Panc1 (cell line): ENCODE measurements at regions of chr2 and their contacts with region 1.

Region 1: DNA sequence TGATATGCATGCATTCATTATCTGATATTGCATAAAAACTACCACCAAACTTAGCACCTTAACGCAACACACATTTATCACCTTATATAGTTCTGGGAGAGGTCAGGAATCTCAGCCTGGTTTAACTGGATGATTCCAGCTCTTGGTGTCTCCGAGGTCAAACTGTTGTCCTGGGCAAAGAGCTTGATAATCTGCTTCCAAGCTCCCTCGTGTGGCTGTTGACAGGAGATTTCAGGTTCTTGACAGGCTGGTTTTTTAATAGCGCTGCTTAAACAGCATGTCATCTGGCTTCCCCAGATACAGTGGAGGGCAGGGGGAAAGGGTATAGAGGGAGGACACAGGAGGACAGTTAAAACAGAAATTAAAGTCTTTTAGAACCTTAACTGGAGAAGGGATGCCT is 785.0 kb downstream of the CNTNAP5 start:
- DNase-seq: no peak
- ATAC-seq: peak; percentile 80
- H3K4me3 ChIP-seq: no peak overlapping the region
- H3K27ac ChIP-seq: no peak overlapping the region
- H3K4me1 ChIP-seq: no peaks in the 10 kb centered on the region
- H3K27me3 ChIP-seq: no peaks in the 10 kb centered on the region
- CTCF ChIP-seq: peak; percentile 70

Region 2: GRCh38 chr2:124027182-124027581 is 783.0 kb before region 1 on chr2:
- CTCF ChIA-PET with region 1: interaction called, 3 read pairs
- POLR2A ChIA-PET with region 1: no interaction called
- in situ Hi-C with region 1: no loop called
- intact Hi-C with region 1: loop called (anchors 5 kb)
- DNase-seq: peak; percentile 33
- ATAC-seq: peak; percentile 91
- H3K4me3 ChIP-seq: no peak overlapping the region
- H3K27ac ChIP-seq: no peak overlapping the region
- H3K4me1 ChIP-seq: no peaks in the 10 kb centered on the region
- H3K27me3 ChIP-seq: no peaks in the 10 kb centered on the region
- CTCF ChIP-seq: peak; percentile 75